OCI-LY7 (cell line): ENCODE measurements at regions of chr20 and their contacts with region 1.

Region 1: GRCh38 chr20:50460460-50461267 is 49.5 kb upstream of the PTPN1 start:
- DNase-seq: peak; percentile 59
- H3K4me3 ChIP-seq: no peak overlapping the region
- H3K27ac ChIP-seq: no peak overlapping the region
- H3K4me1 ChIP-seq: no peaks in the 10 kb centered on the region
- CTCF ChIP-seq: peak; percentile 83

Region 2: GRCh38 chr20:50346372-50347283 is 114.0 kb before region 1 on chr20:
- CTCF ChIA-PET with region 1: no interaction called
- POLR2A ChIA-PET with region 1: no interaction called
- intact Hi-C with region 1: loop called (anchors 10 kb)
- DNase-seq: no peak
- H3K4me3 ChIP-seq: no peak overlapping the region
- H3K27ac ChIP-seq: no peak overlapping the region
- H3K4me1 ChIP-seq: no peaks in the 10 kb centered on the region
- CTCF ChIP-seq: no peak

Region 3: GRCh38 chr20:50399917-50400704 is 60.6 kb before region 1 on chr20:
- CTCF ChIA-PET with region 1: no interaction called
- POLR2A ChIA-PET with region 1: no interaction called
- intact Hi-C with region 1: no loop called
- DNase-seq: no peak
- H3K4me3 ChIP-seq: no peak overlapping the region
- H3K27ac ChIP-seq: no peak overlapping the region
- H3K4me1 ChIP-seq: no peaks in the 10 kb centered on the region
- CTCF ChIP-seq: no peak

Region 4: DNA sequence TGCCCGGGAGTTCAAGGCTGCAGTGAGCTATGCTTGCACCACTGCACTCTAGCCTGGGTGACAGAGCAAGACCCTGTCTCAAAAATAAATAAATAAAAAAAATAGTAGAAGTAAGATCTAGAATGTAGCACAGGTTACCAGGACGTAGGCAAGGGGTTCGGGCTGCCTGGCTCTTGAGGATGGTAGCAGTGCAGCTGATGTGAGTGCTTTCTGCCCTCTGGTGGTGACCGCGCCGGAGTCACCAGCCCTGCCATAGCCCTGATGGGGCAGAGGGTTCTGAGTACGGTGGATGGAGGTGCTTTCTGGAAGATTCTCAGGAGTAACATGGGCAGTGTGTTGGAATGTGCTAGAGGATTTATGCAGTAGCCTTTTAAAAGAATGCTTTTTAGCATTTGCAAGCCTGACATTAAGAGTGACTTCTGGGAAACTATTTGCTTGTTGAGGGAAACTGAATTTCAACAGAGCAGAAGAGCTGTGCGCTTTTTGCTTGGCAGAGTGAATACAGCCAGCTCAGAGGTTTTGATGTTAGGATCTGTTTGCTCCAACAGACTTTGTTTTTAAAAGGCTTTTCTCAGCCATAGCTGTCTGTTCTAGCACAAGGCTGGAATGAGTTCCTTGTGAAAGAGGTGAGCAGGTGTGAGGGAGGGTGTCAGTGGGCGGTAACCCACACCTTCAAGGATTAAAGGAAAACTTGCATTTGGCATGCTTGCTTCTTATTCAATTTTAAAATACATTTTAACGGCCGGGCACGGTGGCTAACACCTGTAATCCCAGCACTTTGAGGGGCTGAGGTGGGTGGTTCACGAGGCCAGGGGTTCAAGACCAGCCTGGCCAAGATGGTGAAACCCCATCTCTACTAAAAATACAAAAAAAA is 115.4 kb after region 1 on chr20:
- CTCF ChIA-PET with region 1: interaction called, 3 read pairs
- POLR2A ChIA-PET with region 1: interaction called, 3 read pairs
- intact Hi-C with region 1: loop called (anchors 1 kb)
- DNase-seq: peak; percentile 70
- H3K4me3 ChIP-seq: no peak overlapping the region
- H3K27ac ChIP-seq: no peak overlapping the region
- H3K4me1 ChIP-seq: peaks cover 6% of the 10 kb centered on the region
- CTCF ChIP-seq: peak; percentile 87